ENCODE measurements at regions of chr17 and their contacts with region 1.

Region 1: DNA sequence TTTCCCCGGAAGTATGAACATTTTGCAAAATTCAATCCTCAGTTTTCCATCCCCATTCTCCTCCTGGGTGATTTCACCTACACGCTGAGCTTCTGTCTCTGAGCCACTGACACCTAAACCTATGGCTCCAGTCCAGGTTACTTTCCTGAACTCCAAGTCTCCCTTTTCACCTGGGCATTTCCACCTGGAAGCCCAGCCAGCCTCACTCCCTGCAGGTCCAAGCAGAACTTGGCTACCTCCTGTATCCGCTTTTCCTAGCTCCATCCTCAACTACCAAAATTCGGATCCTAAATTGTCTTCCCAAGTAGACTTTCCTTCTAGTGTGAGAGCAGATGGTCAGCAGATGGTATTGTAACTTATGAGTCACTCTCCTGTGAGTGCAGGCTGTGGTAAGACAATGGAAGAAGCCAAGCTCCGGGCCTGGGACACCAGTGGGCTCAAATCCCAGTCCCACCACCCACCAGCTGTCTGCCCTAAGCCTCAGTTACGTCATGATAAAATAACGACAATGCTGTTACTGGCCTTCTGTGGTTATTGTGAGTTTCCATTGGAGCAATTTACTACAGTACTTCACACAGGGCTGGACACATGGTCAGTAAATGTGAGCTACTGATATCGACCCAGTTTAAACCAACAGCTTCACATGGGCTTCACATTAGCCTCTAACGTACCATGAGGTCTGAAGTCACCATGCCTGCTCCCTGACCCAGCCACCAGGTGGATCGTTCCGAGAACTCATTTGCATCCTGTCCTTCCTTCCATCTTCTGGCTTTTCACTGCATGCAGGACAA is 33.3 kb downstream of the PECAM1 start:
- DNase-seq: peak; percentile 91
- H3K4me3 ChIP-seq: no peak overlapping the region
- H3K27ac ChIP-seq: peak overlapping the region; percentile 38
- H3K4me1 ChIP-seq: peaks cover 60% of the 10 kb centered on the region
- H3K27me3 ChIP-seq: no peaks in the 10 kb centered on the region
- CTCF ChIP-seq: no peak
- POLR2A ChIP-seq: peak; percentile 45

Region 2: GRCh38 chr17:64117981-64118979 is 239.1 kb before region 1 on chr17:
- CTCF ChIA-PET with region 1: no interaction called
- POLR2A ChIA-PET with region 1: no interaction called
- dilution Hi-C with region 1: no loop called
- intact Hi-C with region 1: no loop called
- DNase-seq: peak; percentile 22
- H3K4me3 ChIP-seq: no peak overlapping the region
- H3K27ac ChIP-seq: no peak overlapping the region
- H3K4me1 ChIP-seq: no peaks in the 10 kb centered on the region
- H3K27me3 ChIP-seq: no peaks in the 10 kb centered on the region
- CTCF ChIP-seq: no peak
- POLR2A ChIP-seq: no peak

Region 3: DNA sequence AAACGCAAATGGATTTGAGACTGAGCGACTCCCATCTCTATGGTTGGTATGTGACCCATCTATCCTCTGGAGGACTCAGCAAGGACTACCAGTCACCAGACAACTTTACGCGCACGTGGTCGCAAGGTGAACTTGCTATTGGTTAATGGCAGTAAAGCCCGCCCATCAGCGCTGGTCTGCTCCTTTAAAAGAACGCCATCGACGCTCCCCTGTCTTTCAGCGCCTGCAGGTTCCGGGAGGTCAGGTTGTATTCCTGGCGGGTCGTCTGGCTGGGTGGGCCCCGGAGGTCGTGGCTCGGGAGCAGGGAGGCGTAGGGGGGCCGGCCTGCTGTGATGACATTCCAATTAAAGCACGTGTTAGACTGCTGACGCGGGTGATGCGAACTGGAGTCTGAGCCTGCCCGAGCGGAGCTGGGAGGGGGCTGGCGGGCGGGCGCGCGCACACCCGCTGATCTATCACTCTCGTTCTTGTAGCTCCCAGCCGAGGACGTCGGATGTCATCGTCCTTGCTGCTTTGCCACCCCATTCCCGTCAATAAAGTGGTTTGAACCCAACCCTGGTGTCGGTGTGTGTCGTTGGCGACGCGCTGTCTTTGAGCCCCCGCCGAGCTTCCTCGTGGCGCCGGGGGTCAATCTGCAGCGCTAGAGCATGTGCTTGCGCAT is 211.5 kb before region 1 on chr17:
- CTCF ChIA-PET with region 1: no interaction called
- POLR2A ChIA-PET with region 1: no interaction called
- dilution Hi-C with region 1: no loop called
- intact Hi-C with region 1: no loop called
- DNase-seq: peak; percentile 99
- H3K4me3 ChIP-seq: peak overlapping the region; percentile 31 to 72 (median 64)
- H3K27ac ChIP-seq: peak overlapping the region; percentile 63
- H3K4me1 ChIP-seq: peaks cover 21% of the 10 kb centered on the region
- H3K27me3 ChIP-seq: no peaks in the 10 kb centered on the region
- CTCF ChIP-seq: no peak
- POLR2A ChIP-seq: peak; percentile 100

Region 4: GRCh38 chr17:64281962-64282727 is 75.2 kb before region 1 on chr17:
- CTCF ChIA-PET with region 1: no interaction called
- POLR2A ChIA-PET with region 1: no interaction called
- dilution Hi-C with region 1: no loop called
- intact Hi-C with region 1: no loop called
- DNase-seq: peak; percentile 87
- H3K4me3 ChIP-seq: no peak overlapping the region
- H3K27ac ChIP-seq: no peak overlapping the region
- H3K4me1 ChIP-seq: peaks cover 17% of the 10 kb centered on the region
- H3K27me3 ChIP-seq: no peaks in the 10 kb centered on the region
- CTCF ChIP-seq: peak; percentile 58 to 61
- POLR2A ChIP-seq: no peak

Region 5: DNA sequence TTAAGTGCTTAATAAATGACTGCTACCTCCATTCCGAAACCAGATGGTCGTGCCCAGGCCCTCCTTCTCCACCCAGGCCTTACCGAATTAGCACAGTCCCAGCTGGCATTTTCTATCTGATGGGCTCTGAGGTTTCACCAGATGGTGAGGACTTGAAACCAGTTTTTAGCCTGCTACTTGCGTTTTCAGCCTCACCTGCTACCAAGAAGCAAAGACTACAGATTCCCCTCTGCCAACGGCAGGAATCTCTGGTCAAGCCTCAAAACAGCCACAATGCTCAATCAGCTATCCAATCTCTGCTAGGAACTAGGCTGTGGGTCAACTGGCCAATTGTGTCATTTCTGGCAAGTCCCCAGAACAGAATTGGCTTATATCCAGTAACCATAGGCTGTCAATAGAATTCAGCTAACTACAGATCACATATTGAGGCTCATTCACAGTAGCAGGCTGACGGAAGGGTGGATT is 21.5 kb after region 1 on chr17:
- CTCF ChIA-PET with region 1: interaction called, 6 read pairs
- POLR2A ChIA-PET with region 1: interaction called, 4 read pairs
- dilution Hi-C with region 1: no loop called
- intact Hi-C with region 1: loop called (anchors 2 kb)
- DNase-seq: peak; percentile 83
- H3K4me3 ChIP-seq: no peak overlapping the region
- H3K27ac ChIP-seq: peak overlapping the region; percentile 31
- H3K4me1 ChIP-seq: peaks cover 54% of the 10 kb centered on the region
- H3K27me3 ChIP-seq: no peaks in the 10 kb centered on the region
- CTCF ChIP-seq: no peak
- POLR2A ChIP-seq: peak; percentile 59

Region 6: DNA sequence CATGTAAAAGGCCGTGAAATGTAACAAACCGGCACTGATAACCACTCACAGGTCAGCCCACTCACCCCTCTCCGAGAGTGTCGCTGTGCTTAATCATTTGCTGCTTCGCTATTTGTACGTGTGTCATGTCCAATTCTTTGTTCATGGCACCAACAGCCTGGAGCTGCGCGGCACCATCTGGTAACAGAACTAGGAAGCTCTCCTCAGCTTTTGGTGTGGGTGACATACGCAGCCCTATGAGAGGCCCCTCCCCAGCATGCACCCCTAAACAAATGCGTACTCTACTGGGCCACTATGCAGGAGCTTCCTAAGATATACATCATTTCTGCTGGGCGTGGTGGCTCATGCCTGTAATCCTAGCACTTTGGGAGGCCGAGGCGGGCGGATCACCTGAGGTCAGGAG is 35.6 kb after region 1 on chr17:
- CTCF ChIA-PET with region 1: no interaction called
- POLR2A ChIA-PET with region 1: no interaction called
- dilution Hi-C with region 1: no loop called
- intact Hi-C with region 1: loop called (anchors 2 kb)
- DNase-seq: no peak
- H3K4me3 ChIP-seq: no peak overlapping the region
- H3K27ac ChIP-seq: no peak overlapping the region
- H3K4me1 ChIP-seq: peaks cover 16% of the 10 kb centered on the region
- H3K27me3 ChIP-seq: no peaks in the 10 kb centered on the region
- CTCF ChIP-seq: no peak
- POLR2A ChIP-seq: no peak

Measured in endothelial cell of umbilical vein (primary cell).